CD8-positive, alpha-beta T cell (primary cell): ENCODE measurements at regions of chr3 and their contacts with region 1.

Region 1: GRCh38 chr3:7678521-7678920 is 817.6 kb downstream of the GRM7 start:
- DNase-seq: no peak
- ATAC-seq: no peak
- H3K4me3 ChIP-seq: no peak overlapping the region
- H3K4me3 Mint-ChIP-seq: no peak overlapping the region
- H3K27ac ChIP-seq: no peak overlapping the region
- H3K27ac Mint-ChIP-seq: no peak overlapping the region
- H3K4me1 ChIP-seq: no peaks in the 10 kb centered on the region
- H3K4me1 Mint-ChIP-seq: no peaks in the 10 kb centered on the region
- H3K27me3 ChIP-seq: no peaks in the 10 kb centered on the region
- H3K27me3 Mint-ChIP-seq: no peaks in the 10 kb centered on the region
- CTCF ChIP-seq: no peak

Region 2: GRCh38 chr3:7707187-7707586 is 28.7 kb after region 1 on chr3:
- CTCF ChIA-PET with region 1: no interaction called
- POLR2A ChIA-PET with region 1: no interaction called
- intact Hi-C with region 1: no loop called
- DNase-seq: no peak
- ATAC-seq: no peak
- H3K4me3 ChIP-seq: no peak overlapping the region
- H3K4me3 Mint-ChIP-seq: no peak overlapping the region
- H3K27ac ChIP-seq: no peak overlapping the region
- H3K27ac Mint-ChIP-seq: no peak overlapping the region
- H3K4me1 ChIP-seq: no peaks in the 10 kb centered on the region
- H3K4me1 Mint-ChIP-seq: no peaks in the 10 kb centered on the region
- H3K27me3 ChIP-seq: no peaks in the 10 kb centered on the region
- H3K27me3 Mint-ChIP-seq: no peaks in the 10 kb centered on the region
- CTCF ChIP-seq: no peak

Region 3: GRCh38 chr3:7721869-7722268 is 43.3 kb after region 1 on chr3:
- CTCF ChIA-PET with region 1: no interaction called
- POLR2A ChIA-PET with region 1: no interaction called
- intact Hi-C with region 1: loop called in 1 of 2 experiments (anchors 2 kb)
- DNase-seq: no peak
- ATAC-seq: no peak
- H3K4me3 ChIP-seq: no peak overlapping the region
- H3K4me3 Mint-ChIP-seq: no peak overlapping the region
- H3K27ac ChIP-seq: no peak overlapping the region
- H3K27ac Mint-ChIP-seq: no peak overlapping the region
- H3K4me1 ChIP-seq: no peaks in the 10 kb centered on the region
- H3K4me1 Mint-ChIP-seq: no peaks in the 10 kb centered on the region
- H3K27me3 ChIP-seq: no peaks in the 10 kb centered on the region
- H3K27me3 Mint-ChIP-seq: no peaks in the 10 kb centered on the region
- CTCF ChIP-seq: no peak